Prostate gland (tissue), 2 donors: ENCODE measurements at regions of chr7 and their contacts with region 1.

Region 1: DNA sequence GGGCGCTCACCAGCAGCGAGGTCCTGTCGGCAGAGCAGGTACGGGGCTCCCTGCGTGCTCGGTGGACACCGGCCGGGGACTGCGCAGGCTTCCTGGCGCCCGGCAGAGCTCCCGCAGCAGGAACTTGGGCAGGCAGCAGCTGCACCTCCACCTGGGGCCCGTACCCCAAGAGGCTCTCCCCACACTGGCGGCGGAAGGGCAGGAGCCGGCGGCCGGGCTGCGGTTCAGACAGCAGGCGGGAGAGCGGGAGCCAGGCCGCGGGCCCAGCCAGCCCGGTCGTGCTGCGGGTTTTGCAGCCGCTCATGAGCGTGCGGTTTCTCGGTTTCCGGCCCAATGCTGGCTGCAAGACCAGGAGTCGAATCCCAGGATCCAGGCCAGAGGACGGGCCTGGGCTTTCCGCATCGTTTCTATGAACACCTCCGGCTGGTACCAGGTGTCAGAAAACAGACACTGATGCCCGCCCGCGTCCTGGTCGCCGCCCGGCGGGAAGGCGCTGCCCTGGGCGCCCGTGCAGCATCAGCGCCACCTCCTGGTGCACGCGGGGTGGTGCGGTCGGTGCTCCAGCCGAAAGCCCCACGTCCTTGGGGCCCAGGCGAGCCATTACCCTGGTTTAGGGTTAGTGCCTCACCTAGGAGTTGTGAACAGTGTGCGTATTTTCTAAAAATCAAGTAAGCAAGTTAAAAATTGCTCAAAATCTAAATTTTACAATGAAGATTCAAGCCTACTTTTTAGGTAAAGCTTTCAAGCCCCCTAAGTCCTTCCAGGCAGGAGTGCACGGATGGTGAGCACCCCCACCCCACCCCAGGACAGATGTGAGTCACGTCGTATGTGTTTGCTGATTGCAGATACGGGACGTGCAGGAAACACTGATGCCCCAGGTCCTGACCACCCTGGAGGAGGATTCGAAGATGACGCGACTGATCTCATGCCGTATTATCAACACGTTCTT is 47.4 kb upstream of the PRKAR1B start:
- DNase-seq: peak; percentile 43
- H3K4me3 ChIP-seq: no peak overlapping the region
- H3K27ac ChIP-seq: no peak overlapping the region
- H3K4me1 ChIP-seq: peaks cover 16% of the 10 kb centered on the region
- H3K27me3 ChIP-seq: no peaks in the 10 kb centered on the region
- CTCF ChIP-seq: peak; percentile 90 to 97 (median 92)
- POLR2A ChIP-seq: no peak

Region 2: DNA sequence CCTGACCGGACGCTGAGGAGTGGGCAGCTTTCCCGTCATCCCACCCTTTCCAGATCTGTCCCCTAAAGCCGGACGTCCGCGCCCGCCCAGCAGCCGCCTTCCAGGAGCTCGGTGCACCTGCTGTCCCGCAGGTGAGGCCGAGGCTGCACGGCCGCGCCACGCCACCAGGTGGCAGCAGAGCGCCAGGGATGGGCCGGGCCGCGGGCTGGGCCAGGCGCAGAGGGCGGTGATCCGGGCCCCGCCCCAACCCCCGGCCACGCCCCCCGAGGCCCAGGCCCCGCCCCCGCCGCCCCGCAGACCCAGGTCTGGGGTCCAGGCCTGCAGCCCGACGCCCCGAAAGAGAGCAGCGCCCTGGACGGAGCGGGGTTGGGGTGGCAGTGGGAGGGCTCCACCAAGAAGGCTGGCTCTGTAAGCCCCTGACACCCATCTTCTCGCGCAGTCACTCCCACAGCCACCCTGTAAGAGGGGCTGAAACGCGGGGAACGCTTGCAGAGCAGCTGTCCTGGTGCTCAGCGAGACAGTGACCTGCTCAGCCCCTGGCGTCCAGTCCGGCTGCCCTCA is 452.2 kb before region 1 on chr7:
- intact Hi-C with region 1: loop called (anchors 2 kb)
- DNase-seq: peak; percentile 69
- H3K4me3 ChIP-seq: no peak overlapping the region
- H3K27ac ChIP-seq: no peak overlapping the region
- H3K4me1 ChIP-seq: peaks cover 6% of the 10 kb centered on the region
- H3K27me3 ChIP-seq: no peaks in the 10 kb centered on the region
- CTCF ChIP-seq: peak; percentile 93 to 99 (median 97)
- POLR2A ChIP-seq: no peak

Region 3: GRCh38 chr7:518630-519483 is 255.6 kb before region 1 on chr7:
- intact Hi-C with region 1: loop called (anchors 5 kb)
- DNase-seq: peak; percentile 92
- H3K4me3 ChIP-seq: peak overlapping the region; percentile 74 to 86
- H3K27ac ChIP-seq: peak overlapping the region; percentile 83 to 90
- H3K4me1 ChIP-seq: peaks cover 29% of the 10 kb centered on the region
- H3K27me3 ChIP-seq: no peaks in the 10 kb centered on the region
- CTCF ChIP-seq: peak in 1 of 4 experiments; percentile 19
- POLR2A ChIP-seq: peak; percentile 89

Region 4: DNA sequence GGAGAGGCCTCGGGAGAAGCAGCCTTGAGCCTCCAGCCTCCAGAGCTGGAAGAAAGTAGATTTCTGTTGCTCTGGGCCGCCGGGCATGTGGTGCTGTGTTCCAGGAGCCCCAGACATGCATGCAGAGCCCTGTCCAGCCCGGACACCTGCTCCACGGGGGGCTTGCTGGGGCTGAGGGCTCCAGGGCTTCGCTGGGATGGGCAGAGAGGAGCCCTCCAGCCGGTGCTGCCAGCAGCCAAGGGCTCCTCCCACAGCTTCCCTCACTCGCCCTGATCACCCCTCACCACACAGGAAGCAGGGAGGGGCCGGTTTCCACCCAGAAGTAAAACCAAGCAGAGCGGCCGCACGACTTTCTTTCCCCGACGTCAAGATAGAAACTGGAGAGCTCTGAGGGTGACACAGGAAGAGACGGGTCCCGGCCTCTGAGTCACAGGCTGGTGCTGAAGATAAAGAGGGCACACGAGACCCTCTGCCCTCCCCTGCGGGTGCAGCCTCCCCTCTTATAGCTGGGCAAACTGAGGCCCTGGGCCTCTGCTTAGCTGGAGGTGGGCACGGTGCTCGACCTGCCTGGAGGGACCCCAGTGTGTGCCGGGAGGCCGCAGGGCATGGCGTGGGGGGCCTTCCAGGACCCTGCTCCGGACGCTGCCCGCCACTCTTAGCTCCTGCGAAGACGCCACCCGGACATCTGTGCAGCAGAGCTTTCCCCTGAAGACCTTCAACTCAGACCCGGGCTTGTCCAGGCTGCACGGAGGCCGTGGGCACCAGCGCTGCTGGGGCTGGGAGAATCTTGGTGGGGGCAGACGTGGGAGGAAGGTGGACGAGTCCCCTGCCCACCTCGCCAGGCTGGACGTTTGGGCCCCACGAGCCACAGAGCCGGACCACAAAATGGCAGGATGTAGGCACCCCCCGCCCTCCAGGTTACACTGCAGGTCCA is 148.9 kb after region 1 on chr7:
- intact Hi-C with region 1: no loop called
- DNase-seq: no peak
- H3K4me3 ChIP-seq: no peak overlapping the region
- H3K27ac ChIP-seq: no peak overlapping the region
- H3K4me1 ChIP-seq: no peaks in the 10 kb centered on the region
- H3K27me3 ChIP-seq: no peaks in the 10 kb centered on the region
- CTCF ChIP-seq: no peak
- POLR2A ChIP-seq: no peak